Vagina (tissue), 2 donors: ENCODE measurements at regions of chr5 and their contacts with region 1.

Region 1: DNA sequence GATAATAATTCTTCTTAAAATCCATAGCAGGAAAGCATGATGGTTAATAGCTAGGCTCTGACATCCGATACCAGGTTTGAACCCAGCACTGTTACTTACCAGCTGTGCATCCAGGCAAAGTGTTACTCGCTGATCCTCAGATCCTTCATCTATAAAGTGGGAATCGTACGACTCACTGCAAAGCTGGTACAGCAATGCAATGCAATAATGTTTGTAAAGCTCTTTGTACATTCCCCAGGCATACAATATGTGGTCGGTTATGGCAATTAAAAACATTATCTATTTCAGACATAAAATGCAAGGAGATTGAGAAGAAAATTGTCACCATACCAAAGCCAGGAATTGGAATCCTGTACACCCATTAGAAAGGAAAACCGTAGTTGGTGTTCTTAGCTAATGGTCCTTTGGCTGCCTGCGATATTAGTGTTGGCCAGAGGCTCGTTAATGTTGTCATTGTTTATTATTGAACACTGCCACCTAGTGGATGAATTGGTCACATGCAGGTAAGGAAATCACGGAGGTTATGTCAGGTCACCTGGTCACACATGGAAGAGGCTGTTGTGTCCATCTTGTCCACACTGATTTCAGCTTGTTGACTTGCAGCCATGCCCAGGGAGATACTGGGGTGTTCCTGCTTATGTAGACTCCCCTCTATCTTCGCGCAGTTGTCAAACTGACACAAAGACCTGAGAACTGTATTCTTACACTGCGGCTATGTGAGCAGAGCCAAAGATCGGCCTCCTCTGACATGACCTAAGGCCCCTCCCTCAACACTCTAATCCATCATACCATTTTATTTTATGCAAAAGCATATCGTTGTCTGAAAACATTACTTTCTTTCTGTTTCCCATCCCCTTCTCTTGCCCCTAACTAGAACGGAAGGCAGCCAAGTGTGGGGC is 87.5 kb upstream of the PPP2R2B start:
- DNase-seq: no peak
- H3K4me3 ChIP-seq: no peak overlapping the region
- H3K27ac ChIP-seq: no peak overlapping the region
- H3K4me1 ChIP-seq: no peaks in the 10 kb centered on the region
- H3K27me3 ChIP-seq: no peaks in the 10 kb centered on the region
- CTCF ChIP-seq: peak; percentile 71 to 83 (median 78)
- POLR2A ChIP-seq: no peak

Region 2: DNA sequence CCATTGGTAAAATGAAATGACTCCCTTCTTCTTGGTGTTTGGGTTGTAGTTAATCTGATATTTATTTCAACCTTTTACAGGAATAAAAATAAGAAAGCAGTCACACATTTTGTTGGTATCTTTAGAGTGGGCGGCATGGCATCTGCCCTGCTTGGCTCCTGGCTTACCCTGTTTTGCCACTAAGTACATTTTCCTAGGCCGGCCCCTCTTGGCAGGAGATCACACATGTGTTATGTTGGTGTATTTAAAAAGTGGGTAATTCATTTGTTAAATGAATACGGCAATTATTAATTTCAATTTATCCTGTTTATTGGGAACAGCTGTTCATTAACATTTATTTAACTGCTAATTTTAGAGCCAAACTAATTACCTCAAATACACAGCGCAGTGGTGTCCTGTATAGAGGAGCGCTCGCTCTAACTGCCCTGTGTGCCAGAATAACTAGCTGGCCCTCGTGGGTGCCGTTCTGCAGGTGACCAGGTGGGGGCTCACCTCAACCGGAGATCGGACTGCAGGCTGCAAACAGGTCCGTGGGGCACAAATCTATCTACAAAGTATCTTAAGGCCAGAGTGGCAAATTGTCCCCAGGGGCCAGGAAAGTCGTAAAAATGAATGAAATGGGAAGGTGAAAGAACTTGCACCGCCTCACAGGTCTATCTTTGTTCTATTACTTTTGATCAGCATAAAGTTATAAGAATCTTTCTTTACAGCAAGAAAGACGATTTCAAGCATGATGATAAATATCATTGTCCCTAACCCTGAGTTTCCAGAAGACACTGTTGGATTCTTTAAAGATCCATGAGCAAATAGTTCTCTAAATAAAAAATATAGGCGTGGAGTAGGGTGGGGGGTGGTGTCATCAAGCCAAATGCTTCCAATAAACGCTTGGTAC is 423.8 kb before region 1 on chr5:
- intact Hi-C with region 1: loop called (anchors 5 kb)
- DNase-seq: no peak
- H3K4me3 ChIP-seq: no peak overlapping the region
- H3K27ac ChIP-seq: no peak overlapping the region
- H3K4me1 ChIP-seq: no peaks in the 10 kb centered on the region
- H3K27me3 ChIP-seq: no peaks in the 10 kb centered on the region
- CTCF ChIP-seq: peak; percentile 62 to 66 (median 65)
- POLR2A ChIP-seq: no peak